Activated naive CD4-positive, alpha-beta T cell treated with anti-CD3 and anti-CD28 coated beads for 36 hours (primary cell): ENCODE measurements at regions of chr14 and their contacts with region 1.

Region 1: GRCh38 chr14:105739331-105740102 is 213.1 kb downstream of the TMEM121 start:
- DNase-seq: no peak
- H3K4me3 Mint-ChIP-seq: no peak overlapping the region
- H3K27ac Mint-ChIP-seq: no peak overlapping the region
- H3K4me1 Mint-ChIP-seq: no peaks in the 10 kb centered on the region
- H3K27me3 Mint-ChIP-seq: no peaks in the 10 kb centered on the region

Region 2: DNA sequence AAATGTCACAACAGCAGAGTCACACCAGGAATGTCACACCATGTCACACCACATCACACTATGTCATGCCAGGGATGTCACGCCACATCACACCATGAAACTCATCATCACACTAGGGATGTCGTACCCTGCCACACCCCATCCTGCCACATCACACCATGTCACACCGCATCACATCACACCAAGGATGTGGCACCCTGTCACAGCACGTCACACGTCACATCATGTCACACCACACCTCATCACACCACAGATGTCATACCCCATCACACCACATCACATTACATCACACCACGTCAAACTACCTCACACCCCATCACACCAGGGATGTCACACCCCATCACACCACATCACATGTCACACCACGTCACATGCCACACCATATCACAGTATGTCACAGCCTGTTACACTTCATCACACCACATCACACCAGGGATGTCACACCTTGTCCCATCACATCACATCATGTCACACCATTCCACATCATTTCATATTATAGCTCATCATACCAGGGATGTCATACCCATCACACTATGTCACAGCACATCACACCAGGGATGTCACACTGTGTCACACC is 122.2 kb before region 1 on chr14:
- CTCF ChIA-PET with region 1: no interaction called
- intact Hi-C with region 1: no loop called
- DNase-seq: peak; percentile 21
- H3K4me3 Mint-ChIP-seq: no peak overlapping the region
- H3K27ac Mint-ChIP-seq: no peak overlapping the region
- H3K4me1 Mint-ChIP-seq: no peaks in the 10 kb centered on the region
- H3K27me3 Mint-ChIP-seq: no peaks in the 10 kb centered on the region

Region 3: GRCh38 chr14:105765893-105766614 is 26.5 kb after region 1 on chr14:
- CTCF ChIA-PET with region 1: no interaction called
- intact Hi-C with region 1: loop called (anchors 2 kb)
- DNase-seq: no peak
- H3K4me3 Mint-ChIP-seq: no peak overlapping the region
- H3K27ac Mint-ChIP-seq: no peak overlapping the region
- H3K4me1 Mint-ChIP-seq: no peaks in the 10 kb centered on the region
- H3K27me3 Mint-ChIP-seq: no peaks in the 10 kb centered on the region